ENCODE measurements at regions of chr10 and their contacts with region 1.

Region 1: DNA sequence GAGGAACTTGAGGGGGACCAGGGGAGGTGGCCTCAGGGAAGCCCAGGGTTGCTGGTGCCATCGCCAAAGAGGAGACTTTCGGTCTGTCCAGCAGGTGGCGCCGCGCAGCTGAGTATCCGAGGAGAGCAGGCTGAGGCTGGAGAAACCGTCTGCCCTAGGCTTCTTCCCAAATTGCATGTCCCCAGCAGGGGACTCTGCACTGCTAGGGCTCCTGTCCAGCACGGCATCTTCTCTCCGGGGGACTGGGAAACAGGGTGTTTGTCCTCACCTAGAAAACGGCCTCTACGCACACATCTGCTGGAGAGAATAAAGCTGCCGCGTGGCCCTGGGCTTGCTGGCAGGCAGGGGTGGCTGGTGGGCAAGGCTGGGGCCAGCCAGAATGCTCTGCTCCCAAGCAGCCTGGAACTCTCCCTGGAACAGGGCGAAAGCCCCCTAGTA is 161.9 kb downstream of the SH2D4B start:
- DNase-seq: peak; percentile 79
- H3K4me3 Mint-ChIP-seq: no peak overlapping the region
- H3K27ac Mint-ChIP-seq: no peak overlapping the region
- H3K4me1 Mint-ChIP-seq: no peaks in the 10 kb centered on the region
- H3K27me3 Mint-ChIP-seq: peaks cover 47% of the 10 kb centered on the region
- CTCF ChIP-seq: peak; percentile 80

Region 2: DNA sequence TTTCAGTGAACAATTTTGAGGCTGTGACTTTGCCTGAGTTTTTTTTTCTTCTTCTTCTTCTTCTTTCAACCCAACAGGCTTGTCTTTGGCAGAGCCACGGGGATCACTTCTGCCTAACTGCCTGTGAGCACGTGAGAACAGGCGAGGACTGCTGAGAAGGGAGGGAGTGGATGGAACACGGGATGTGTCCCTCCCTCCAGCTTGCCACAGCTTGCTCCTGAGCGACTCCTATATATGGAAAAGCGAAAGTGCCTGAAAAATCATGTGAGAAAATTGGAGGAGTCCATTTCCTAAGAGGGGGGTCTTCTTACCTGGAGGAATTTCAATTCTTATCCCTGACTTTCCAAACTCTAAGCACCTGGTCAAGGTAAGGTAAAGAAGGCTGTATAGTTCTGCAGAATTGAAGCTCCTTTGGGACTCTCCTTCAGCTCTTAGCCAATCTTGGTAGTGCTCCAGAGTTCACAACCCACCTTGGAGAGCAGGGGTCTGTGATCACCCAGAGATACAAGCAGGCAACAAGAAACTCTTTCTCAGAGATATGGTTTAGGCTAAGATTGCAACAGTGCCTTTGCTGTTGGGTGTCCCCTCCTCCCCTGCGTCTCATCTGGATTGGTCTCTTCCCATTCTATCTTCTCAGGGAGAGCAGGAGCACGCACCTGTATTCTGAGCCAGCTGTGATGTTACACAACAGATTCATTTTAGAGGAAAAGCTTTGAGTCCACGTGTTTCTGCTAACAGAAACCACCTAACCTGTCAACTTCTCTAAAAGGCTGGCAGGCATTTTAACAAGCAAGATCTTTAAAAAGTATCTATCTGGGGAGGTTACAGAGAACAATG is 410.0 kb before region 1 on chr10 and contains the start of gene MAT1A:
- CTCF ChIA-PET with region 1: no interaction called
- POLR2A ChIA-PET with region 1: no interaction called
- intact Hi-C with region 1: no loop called
- DNase-seq: peak; percentile 72
- H3K4me3 Mint-ChIP-seq: peak within 1 kb of the TSS; percentile 4
- H3K27ac Mint-ChIP-seq: peak within 1 kb of the TSS; percentile 1
- H3K4me1 Mint-ChIP-seq: peaks cover 17% of the 10 kb centered on the region
- H3K27me3 Mint-ChIP-seq: no peaks in the 10 kb centered on the region
- CTCF ChIP-seq: no peak
- total RNA-seq, gene MAT1A: 0.26 TPM in 1 of 2 replicates, not detected in the other

Region 3: DNA sequence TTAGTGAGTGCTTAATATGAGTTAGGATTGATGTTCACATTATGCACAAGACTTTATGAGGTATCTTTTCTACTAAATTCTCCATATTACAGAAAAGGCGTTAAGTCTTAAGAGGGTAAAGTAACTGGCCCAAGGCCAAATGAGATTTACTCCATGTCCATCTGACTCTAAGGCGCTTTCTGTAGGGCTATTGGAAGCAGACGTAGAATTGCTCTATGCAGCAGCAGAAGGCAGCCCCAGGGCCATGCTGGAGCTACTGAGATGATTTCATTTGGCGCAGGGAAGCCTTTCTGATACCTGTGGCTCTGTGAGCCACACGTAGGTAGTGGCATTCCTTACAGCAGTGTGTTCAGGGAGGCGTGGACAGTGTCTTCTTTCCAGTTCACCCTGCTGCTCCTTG is 28.9 kb before region 1 on chr10:
- CTCF ChIA-PET with region 1: interaction called, 58 read pairs
- POLR2A ChIA-PET with region 1: no interaction called
- intact Hi-C with region 1: no loop called
- DNase-seq: no peak
- H3K4me3 Mint-ChIP-seq: no peak overlapping the region
- H3K27ac Mint-ChIP-seq: no peak overlapping the region
- H3K4me1 Mint-ChIP-seq: no peaks in the 10 kb centered on the region
- H3K27me3 Mint-ChIP-seq: peaks cover 25% of the 10 kb centered on the region
- CTCF ChIP-seq: no peak

Region 4: GRCh38 chr10:80709866-80710265 is 10.2 kb after region 1 on chr10:
- CTCF ChIA-PET with region 1: interaction called, 38 read pairs
- POLR2A ChIA-PET with region 1: no interaction called
- intact Hi-C with region 1: no loop called
- DNase-seq: no peak
- H3K4me3 Mint-ChIP-seq: no peak overlapping the region
- H3K27ac Mint-ChIP-seq: no peak overlapping the region
- H3K4me1 Mint-ChIP-seq: no peaks in the 10 kb centered on the region
- H3K27me3 Mint-ChIP-seq: peaks cover 83% of the 10 kb centered on the region
- CTCF ChIP-seq: no peak

Region 5: GRCh38 chr10:80718024-80718423 is 18.4 kb after region 1 on chr10:
- CTCF ChIA-PET with region 1: interaction called, 38 read pairs
- POLR2A ChIA-PET with region 1: no interaction called
- intact Hi-C with region 1: no loop called
- DNase-seq: no peak
- H3K4me3 Mint-ChIP-seq: no peak overlapping the region
- H3K27ac Mint-ChIP-seq: no peak overlapping the region
- H3K4me1 Mint-ChIP-seq: no peaks in the 10 kb centered on the region
- H3K27me3 Mint-ChIP-seq: peaks cover 25% of the 10 kb centered on the region
- CTCF ChIP-seq: no peak

Region 6: DNA sequence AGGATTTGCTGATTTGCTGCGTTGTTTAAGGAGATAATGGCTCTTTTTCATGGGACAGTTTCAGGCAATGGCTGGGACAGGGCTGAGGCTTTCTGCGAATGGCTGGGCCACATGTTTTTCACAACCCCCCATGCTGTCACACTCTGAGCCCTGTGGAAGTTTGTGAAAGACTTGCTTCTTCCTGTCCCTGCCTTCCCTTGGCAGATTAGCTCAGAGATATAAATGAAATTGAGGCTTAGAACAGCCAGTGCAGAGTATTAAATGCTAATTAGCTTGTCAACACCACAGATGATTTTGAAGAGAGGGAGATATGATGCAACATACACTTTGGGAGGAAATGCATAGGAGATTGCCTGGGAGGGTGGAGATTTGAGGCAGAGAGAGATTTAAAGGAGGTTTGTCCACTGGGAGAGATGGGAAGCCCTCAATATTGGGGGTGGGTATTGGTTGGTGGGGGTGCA is 70.1 kb after region 1 on chr10:
- CTCF ChIA-PET with region 1: no interaction called
- POLR2A ChIA-PET with region 1: no interaction called
- intact Hi-C with region 1: no loop called
- DNase-seq: no peak
- H3K4me3 Mint-ChIP-seq: no peak overlapping the region
- H3K27ac Mint-ChIP-seq: no peak overlapping the region
- H3K4me1 Mint-ChIP-seq: no peaks in the 10 kb centered on the region
- H3K27me3 Mint-ChIP-seq: peaks cover 85% of the 10 kb centered on the region
- CTCF ChIP-seq: no peak

Region 7: DNA sequence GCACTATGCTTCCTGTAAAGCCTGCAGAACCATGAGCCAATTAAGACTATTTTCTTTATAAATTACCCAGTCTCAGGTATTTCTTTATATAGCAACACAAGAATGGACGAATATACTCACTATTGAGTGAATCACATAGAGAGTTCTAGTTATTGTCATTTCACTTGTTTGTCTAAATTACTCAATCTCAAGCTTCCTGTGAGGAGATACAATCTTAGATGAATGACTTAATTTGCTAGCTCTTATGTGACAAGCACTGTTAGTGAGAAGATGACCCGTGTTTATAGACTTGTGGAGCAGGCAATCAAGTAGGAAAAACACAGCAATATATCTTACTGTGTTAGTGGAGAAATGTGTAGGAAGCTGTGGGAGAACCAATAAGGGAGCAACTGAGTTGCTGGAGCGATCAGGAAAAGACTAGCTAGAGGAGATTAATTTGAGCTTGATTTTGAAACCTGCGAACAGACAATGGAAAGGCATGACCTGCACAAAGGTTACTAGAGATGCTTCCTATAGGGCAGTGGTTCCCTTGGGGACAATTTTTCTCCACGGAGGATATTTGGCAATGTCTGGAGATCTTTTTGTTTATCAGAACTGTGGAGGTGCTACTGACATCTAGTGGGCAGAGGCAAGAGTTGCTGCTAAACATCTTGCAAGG is 319.2 kb after region 1 on chr10:
- CTCF ChIA-PET with region 1: interaction called, 42 read pairs
- POLR2A ChIA-PET with region 1: no interaction called
- intact Hi-C with region 1: loop called (anchors 1 kb)
- DNase-seq: peak; percentile 64
- H3K4me3 Mint-ChIP-seq: no peak overlapping the region
- H3K27ac Mint-ChIP-seq: no peak overlapping the region
- H3K4me1 Mint-ChIP-seq: peaks cover 7% of the 10 kb centered on the region
- H3K27me3 Mint-ChIP-seq: peaks cover 29% of the 10 kb centered on the region
- CTCF ChIP-seq: peak; percentile 77

Region 8: DNA sequence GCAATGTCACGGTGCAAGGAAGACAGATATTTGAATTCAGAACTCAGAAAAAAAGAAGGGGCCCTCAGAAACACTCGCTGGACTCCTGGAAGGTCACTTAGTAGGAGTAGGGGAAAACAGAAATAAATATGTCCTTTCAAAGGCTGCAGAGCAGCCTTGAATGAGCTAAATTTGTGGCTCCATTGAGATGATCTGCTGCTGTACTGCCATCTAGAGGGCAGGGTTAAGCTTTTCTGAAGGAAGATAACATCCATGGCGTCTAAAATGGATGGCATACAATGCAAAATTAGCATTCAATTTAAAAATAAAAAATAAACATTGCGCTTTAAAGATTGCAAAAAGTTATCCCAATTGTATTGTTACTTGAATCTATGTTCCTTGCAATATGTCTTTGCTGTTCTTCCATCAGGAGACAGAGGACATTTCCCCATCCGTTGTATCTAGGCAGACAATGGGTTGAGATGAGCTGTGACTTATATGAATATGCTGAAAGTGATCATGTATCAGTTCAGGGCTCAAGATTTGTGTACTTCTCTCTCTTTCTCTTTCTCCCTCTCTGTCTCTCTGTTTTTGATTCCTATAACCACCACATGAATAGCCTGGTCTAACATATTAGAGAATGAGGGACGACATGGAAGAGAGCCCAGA is 480.3 kb after region 1 on chr10:
- CTCF ChIA-PET with region 1: interaction called, 11 read pairs
- POLR2A ChIA-PET with region 1: no interaction called
- intact Hi-C with region 1: loop called (anchors 1 kb)
- DNase-seq: peak; percentile 53
- H3K4me3 Mint-ChIP-seq: no peak overlapping the region
- H3K27ac Mint-ChIP-seq: no peak overlapping the region
- H3K4me1 Mint-ChIP-seq: no peaks in the 10 kb centered on the region
- H3K27me3 Mint-ChIP-seq: peaks cover 37% of the 10 kb centered on the region
- CTCF ChIP-seq: peak; percentile 44

Measured in MCF 10A (cell line).